SK-N-SH (cell line): ENCODE measurements at regions of chr9 and their contacts with region 1.

Region 1: DNA sequence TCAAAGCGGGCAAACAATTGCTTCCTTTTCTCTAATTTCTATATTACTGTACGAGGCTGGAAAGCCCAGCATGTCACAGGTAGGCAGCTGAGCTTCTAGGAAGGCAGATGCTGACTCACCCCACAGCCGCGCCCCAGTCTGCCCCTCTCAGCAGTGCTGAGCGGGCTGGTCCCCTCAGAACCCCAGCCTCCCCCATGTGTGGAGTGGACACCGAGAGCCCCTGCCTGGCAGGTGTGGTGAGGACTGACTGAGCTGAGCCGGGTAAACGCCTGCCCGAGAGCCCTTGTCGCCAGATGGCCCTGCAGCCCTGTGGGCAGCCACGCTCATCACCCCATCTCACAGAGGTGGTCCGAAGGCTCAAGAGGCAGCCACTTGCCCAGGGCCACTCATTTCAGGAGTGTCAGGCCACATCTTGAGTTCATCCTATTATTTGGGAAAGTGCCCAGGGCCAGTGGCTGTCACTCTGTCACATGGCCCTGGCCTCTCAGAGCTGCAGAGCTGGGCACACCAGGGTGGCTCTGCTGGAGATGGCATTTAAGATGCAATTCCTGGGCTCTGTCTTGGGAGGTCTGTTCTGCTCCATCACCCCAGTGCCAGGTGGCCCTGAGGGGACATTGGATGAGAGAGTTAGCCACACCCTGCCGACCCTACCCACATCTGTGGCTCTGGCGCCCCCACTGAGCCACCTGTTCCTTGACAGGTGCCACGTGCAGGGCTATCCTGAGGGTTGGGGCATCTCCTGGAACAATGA is 12.4 kb downstream of the CARD19 start:
- DNase-seq: no peak
- H3K4me3 ChIP-seq: no peak overlapping the region
- H3K27ac ChIP-seq: no peak overlapping the region; a peak in 1 of 4 replicates
- H3K4me1 ChIP-seq: peaks cover 0 to 9% of the 10 kb centered on the region in 2 experiments; a peak in 1 of 4 replicates
- H3K27me3 ChIP-seq: no peaks in the 10 kb centered on the region
- CTCF ChIP-seq: no peak
- EP300 ChIP-seq: no peak
- RAD21 ChIP-seq: no peak

Region 2: GRCh38 chr9:92963831-92964626 is 144.4 kb before region 1 on chr9:
- CTCF ChIA-PET with region 1: no interaction called
- POLR2A ChIA-PET with region 1: no interaction called
- DNase-seq: no peak
- H3K4me3 ChIP-seq: no peak overlapping the region
- H3K27ac ChIP-seq: no peak overlapping the region
- H3K4me1 ChIP-seq: no peaks in the 10 kb centered on the region
- H3K27me3 ChIP-seq: no peaks in the 10 kb centered on the region
- CTCF ChIP-seq: no peak
- EP300 ChIP-seq: no peak
- RAD21 ChIP-seq: no peak

Region 3: DNA sequence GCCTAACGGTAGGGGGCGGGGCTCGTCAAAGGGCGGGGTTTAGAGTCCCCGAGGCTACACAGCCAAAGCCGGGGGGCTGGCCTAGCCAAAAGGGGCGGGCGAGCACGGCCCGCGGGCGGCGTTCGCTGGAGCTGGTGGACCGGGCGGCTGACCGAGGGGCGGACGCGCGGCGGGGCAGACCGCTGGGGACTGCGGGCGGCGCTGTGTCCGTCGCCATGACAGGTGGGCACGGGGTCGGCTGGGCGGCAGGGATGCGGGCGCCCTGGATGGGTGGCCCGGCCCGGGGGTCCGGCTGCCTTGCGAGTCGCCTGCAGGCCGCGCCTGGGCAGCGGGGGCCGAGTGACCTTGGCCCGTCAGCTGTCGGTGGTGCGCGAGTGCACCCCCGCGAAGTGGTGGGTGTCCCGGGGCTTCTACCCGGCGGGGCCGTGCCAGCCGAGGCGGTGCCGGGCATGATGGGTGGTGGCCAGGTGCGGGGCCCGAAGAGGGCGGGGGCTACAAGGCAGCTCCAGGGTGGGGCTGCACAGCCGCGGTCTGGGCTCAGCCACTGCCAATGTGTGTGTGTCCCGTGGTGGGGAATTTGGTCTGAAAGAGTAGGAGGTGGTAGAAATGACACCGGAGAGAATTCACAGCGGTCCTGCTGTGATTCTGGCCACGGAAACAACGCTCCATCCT is 12.2 kb before region 1 on chr9 and contains the start of gene CARD19:
- CTCF ChIA-PET with region 1: interaction called, 28 read pairs
- POLR2A ChIA-PET with region 1: no interaction called
- DNase-seq: no peak
- H3K4me3 ChIP-seq: peak within 1 kb of the TSS; percentile 96 to 97
- H3K27ac ChIP-seq: peak within 1 kb of the TSS; percentile 88 to 89
- H3K4me1 ChIP-seq: peaks cover 24 to 42% of the 10 kb centered on the region in 2 experiments; a peak in 3 of 4 replicates
- H3K27me3 ChIP-seq: no peaks in the 10 kb centered on the region
- CTCF ChIP-seq: peak; percentile 12; the same call in 1 of the 2 replicates
- EP300 ChIP-seq: no peak
- RAD21 ChIP-seq: no peak
- polyA plus RNA-seq, gene CARD19: 141 and 165 TPM in 2 replicates

Region 4: DNA sequence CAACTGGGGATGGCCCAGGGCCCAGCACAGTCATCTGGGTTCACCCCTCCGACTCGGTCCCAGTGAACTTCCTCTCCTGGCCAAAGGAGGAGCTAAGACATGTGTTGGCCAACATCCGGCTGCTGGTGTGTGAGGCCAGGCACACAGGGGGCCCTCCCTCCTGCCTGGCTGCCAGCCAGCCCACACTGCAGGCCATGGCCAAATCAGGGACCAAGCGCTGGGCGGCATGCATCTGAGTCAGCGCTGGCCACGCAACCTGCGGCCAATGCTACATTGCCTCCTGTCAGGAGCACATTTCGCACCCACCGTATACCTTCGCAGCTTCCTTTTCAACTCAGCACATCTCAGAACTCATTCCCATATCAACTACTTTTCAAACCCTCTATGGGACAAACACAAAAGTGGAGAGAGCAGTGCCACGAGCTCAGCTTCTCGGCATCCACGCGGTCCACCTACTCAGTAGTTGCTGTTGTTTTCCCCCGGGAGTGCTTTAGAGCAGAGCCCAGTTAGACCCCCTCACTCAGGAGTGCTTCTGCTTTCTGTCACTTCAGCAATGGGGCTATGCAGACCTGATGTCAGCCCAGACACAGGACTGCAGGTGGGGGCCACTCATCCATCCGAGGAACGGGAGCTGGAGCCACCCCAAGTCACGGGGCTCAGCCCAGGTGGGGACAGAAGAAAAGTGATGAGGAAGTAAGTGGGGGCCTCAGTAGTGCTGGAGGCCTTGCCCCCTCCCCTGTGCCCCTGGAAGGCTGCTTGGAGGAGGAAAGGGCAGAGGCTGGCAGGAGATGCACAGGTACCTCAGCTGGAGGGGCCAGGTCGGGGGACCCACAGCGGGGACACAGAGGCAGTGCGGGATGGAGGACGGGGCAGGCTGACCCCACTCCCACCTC is 11.7 kb after region 1 on chr9:
- CTCF ChIA-PET with region 1: interaction called, 53 read pairs
- POLR2A ChIA-PET with region 1: no interaction called
- DNase-seq: peak; percentile 94
- H3K4me3 ChIP-seq: no peak overlapping the region
- H3K27ac ChIP-seq: peak overlapping the region; percentile 41 to 79
- H3K4me1 ChIP-seq: peaks cover 0 to 15% of the 10 kb centered on the region in 2 experiments; a peak in 2 of 4 replicates
- H3K27me3 ChIP-seq: no peaks in the 10 kb centered on the region
- CTCF ChIP-seq: peak; percentile 37
- EP300 ChIP-seq: peak; percentile 36 to 56; a peak in 2 of 4 replicates
- RAD21 ChIP-seq: peak; percentile 46

Region 5: GRCh38 chr9:93126825-93127368 is 18.4 kb after region 1 on chr9:
- CTCF ChIA-PET with region 1: interaction called, 31 read pairs
- POLR2A ChIA-PET with region 1: no interaction called
- DNase-seq: peak; percentile 73
- H3K4me3 ChIP-seq: no peak overlapping the region
- H3K27ac ChIP-seq: peak overlapping the region in 1 of 2 experiments; percentile 16; a peak in 1 of 4 replicates
- H3K4me1 ChIP-seq: peaks cover 0 to 51% of the 10 kb centered on the region in 2 experiments; a peak in 1 of 4 replicates
- H3K27me3 ChIP-seq: no peaks in the 10 kb centered on the region
- CTCF ChIP-seq: no peak
- EP300 ChIP-seq: no peak
- RAD21 ChIP-seq: no peak

Region 6: GRCh38 chr9:93316866-93317737 is 208.6 kb after region 1 on chr9:
- CTCF ChIA-PET with region 1: interaction called, 12 read pairs
- POLR2A ChIA-PET with region 1: no interaction called
- DNase-seq: no peak
- H3K4me3 ChIP-seq: no peak overlapping the region
- H3K27ac ChIP-seq: no peak overlapping the region
- H3K4me1 ChIP-seq: peaks cover 0 to 32% of the 10 kb centered on the region in 2 experiments; a peak in 1 of 4 replicates
- H3K27me3 ChIP-seq: no peaks in the 10 kb centered on the region
- CTCF ChIP-seq: no peak
- EP300 ChIP-seq: no peak
- RAD21 ChIP-seq: no peak